ENCODE measurements at regions of chr18 and their contacts with region 1.

Region 1: DNA sequence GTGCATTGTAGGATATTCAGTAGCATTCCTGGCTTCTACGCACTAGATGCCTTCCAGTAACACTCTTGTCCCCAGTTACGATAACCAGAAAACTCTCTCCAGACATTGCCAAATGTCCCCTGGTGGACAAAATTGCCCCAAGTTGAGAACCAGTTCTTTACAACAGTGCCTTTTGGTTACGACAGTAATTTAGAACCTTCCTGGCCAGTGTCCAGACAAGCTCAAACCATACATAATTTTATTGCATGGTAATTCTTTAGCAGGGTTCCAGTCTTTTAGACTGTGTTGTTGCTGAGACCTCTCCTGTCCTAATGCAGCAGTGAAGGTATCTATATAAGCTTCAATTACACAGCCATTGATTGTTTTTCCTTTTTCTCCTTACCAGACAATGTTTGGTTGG is 20.2 kb downstream of the RNMT start:
- DNase-seq: no peak
- H3K4me3 ChIP-seq: no peak overlapping the region
- H3K27ac ChIP-seq: no peak overlapping the region
- H3K4me1 ChIP-seq: no peaks in the 10 kb centered on the region
- H3K27me3 ChIP-seq: no peaks in the 10 kb centered on the region
- CTCF ChIP-seq: no peak
- EP300 ChIP-seq: no peak
- POLR2A ChIP-seq: no peak

Region 2: DNA sequence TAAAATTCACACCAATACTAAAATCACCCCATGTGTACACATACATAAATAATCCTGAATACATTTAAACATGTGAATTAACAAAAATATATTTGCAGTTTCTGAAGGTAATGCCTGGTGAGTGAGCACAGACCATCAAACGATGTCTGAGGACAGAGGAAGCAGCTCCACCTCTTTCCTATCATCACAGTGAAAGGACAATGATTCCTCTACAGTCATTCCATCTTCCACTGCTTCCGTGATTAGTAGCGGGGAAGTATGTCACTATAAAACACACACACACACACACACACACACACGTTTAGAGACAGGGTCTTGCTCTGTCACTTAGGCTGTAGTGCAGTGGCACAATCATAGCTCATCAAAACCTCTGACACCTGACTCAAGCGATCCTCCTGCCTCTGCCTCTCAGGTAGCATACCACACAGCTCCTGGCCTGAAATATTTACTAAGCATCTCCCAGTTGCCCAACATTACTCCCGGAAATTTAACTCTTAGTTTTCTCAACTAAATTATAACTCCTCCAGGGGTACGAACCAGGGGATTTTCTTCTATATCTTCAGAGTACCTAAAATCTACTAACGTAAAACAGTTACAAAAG is 33.1 kb before region 1 on chr18:
- intact Hi-C with region 1: loop called (anchors 2 kb)
- DNase-seq: no peak
- H3K4me3 ChIP-seq: no peak overlapping the region
- H3K27ac ChIP-seq: no peak overlapping the region
- H3K4me1 ChIP-seq: peaks cover 0 to 20% (median 7%) of the 10 kb centered on the region in 4 donors
- H3K27me3 ChIP-seq: no peaks in the 10 kb centered on the region
- CTCF ChIP-seq: no peak
- EP300 ChIP-seq: no peak
- POLR2A ChIP-seq: no peak

Measured in esophagus muscularis mucosa (tissue), 4 donors.